ENCODE measurements at regions of chr9 and their contacts with region 1.

Region 1: GRCh38 chr9:109817846-109818472 is 38.0 kb downstream of the PALM2AKAP2 start:
- DNase-seq: peak; percentile 72
- H3K4me3 Mint-ChIP-seq: no peak overlapping the region
- H3K27ac Mint-ChIP-seq: no peak overlapping the region
- H3K4me1 Mint-ChIP-seq: no peaks in the 10 kb centered on the region
- H3K27me3 Mint-ChIP-seq: peaks cover 13% of the 10 kb centered on the region

Region 2: DNA sequence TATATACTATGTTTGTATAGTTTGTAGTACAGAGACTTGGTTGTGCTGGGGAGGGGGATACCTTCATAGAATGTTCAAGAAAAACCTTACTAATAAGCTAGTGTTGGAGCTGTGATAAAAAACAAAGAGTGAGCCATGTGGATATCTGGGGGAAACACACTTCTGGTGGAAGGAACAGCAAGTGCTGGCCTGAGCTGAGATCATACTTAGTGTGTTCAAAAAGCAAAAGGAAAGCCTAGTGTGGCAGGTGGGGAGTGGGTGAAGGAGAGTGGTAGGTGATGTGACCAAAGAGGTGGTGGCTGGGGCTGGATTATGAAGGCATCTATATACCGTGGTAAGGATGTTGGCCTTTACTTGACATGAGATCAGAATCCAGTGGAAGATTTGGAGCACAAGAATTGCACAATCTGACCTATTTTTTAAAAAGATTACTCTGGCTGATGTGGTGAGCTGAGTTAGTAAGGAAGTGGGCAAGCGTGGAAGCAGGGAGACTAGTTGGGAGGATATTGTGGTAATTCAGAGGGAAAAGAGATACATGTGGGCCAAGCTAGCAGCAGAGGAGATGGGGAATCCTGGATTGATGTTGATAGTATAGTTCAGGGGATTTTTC is 11.3 kb before region 1 on chr9:
- CTCF ChIA-PET with region 1: interaction called, 14 read pairs
- intact Hi-C with region 1: no loop called
- DNase-seq: no peak
- H3K4me3 Mint-ChIP-seq: no peak overlapping the region
- H3K27ac Mint-ChIP-seq: no peak overlapping the region
- H3K4me1 Mint-ChIP-seq: no peaks in the 10 kb centered on the region
- H3K27me3 Mint-ChIP-seq: peaks cover 11% of the 10 kb centered on the region

Measured in activated naive CD4-positive, alpha-beta T cell treated with anti-CD3 and anti-CD28 coated beads for 36 hours (primary cell).